ENCODE measurements at regions of chr3 and their contacts with region 1.

Region 1: DNA sequence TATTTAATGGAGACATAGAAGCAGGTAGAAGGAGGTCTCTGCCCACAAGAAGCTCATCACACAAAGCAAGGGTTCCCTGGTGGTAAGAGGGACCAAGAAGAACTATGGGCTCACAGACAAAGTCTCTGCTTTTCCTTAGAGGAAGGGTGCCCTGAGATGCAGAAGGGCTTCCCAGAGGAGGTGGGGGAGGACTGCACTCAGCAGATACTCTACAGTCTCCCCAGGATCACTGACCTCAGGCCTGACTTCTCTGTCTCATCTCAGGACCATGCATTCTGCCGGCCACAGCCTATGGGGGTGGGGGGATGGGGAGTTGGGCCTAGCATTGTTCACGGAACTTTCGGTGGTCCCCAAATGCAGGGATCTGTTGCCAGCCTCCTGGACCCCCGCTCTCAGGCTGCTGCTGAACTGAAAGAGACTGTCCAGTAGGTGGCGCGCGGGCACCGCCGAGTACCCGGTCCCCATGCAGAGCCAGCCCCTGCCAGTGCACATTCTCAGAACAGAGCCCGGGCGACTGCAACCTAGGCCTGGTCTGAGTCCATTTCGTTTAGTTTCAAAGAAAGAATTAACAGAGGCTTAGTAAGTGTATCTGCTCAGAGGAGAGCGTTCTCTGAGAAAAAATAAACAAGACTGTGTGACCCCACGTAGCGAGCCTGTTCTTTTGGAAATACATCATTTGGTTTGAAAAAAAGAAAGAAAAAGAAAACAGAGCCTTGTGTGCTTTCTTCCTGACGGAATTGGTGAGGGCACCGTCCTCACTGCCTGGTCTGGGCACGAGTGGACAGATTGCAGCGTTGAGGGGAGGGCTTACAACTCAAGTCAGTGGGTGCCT is 74.1 kb downstream of the LRTM1 start:
- DNase-seq: peak; percentile 70
- H3K4me3 ChIP-seq: no peak overlapping the region
- H3K27ac ChIP-seq: no peak overlapping the region
- H3K4me1 ChIP-seq: no peaks in the 10 kb centered on the region
- H3K27me3 ChIP-seq: no peaks in the 10 kb centered on the region
- CTCF ChIP-seq: peak; percentile 80

Region 2: DNA sequence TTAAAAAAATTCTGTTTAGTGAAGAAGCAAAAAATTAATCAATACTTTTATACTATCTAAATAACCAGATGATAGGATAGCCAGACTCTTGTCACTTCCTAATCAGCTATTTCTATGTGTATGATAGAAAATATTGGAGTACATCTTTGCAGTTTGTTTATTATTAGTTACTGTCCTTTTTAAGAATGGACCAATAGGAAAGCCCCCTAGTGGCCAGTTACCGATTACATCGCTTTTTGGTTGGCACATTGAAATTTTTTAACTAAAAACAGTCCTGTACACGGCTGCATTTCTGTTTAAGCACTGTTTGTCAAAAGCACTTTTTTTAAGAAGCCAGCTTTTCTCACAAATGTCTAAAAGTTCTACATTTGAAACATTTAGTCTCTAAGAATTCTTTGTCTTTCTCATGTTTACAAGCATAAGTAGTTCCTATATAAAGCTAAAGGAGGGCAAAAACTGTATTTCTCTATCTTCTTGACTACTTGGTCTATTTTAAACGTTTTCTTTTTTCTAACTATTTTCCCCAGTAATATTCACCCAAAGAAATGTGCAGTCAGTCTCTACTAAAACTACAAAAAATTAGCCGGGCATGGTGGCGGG is 327.2 kb after region 1 on chr3:
- intact Hi-C with region 1: loop called (anchors 10 kb)
- DNase-seq: peak; percentile 30
- H3K4me3 ChIP-seq: no peak overlapping the region
- H3K27ac ChIP-seq: no peak overlapping the region
- H3K4me1 ChIP-seq: no peaks in the 10 kb centered on the region
- H3K27me3 ChIP-seq: no peaks in the 10 kb centered on the region
- CTCF ChIP-seq: peak; percentile 77

Region 3: DNA sequence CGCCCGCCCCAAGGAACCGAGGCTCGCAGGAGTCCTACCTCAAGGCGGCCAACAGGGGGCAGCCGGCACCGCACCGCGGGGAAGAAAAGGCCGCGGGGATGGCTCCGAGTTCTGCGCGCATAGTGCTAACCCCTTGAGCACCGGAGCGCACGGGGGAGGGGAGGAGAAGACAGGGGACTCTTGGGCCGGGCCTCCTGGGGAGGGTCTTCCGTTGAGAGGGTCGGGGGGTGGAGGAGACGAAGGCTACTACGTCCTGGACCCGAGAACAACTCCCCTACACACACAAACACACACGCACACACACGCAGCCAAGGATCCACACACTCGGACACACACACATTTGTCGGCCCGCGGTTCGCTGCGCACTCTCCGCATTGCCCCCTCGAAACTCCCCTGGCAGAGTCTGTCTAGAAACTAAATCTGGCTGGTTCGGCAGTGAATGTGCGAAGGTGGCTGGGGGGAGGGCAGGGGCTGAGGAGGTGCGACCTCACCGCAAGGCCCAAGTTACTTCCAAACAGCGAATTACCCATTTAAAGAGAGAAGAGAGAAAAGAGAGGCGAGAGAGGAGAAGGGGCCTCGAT is 631.5 kb after region 1 on chr3:
- intact Hi-C with region 1: loop called (anchors 10 kb)
- DNase-seq: peak; percentile 75
- H3K4me3 ChIP-seq: peak overlapping the region; percentile 57
- H3K27ac ChIP-seq: peak overlapping the region; percentile 23
- H3K4me1 ChIP-seq: peaks cover 10% of the 10 kb centered on the region
- H3K27me3 ChIP-seq: peaks cover 40% of the 10 kb centered on the region
- CTCF ChIP-seq: peak; percentile 70

Region 4: DNA sequence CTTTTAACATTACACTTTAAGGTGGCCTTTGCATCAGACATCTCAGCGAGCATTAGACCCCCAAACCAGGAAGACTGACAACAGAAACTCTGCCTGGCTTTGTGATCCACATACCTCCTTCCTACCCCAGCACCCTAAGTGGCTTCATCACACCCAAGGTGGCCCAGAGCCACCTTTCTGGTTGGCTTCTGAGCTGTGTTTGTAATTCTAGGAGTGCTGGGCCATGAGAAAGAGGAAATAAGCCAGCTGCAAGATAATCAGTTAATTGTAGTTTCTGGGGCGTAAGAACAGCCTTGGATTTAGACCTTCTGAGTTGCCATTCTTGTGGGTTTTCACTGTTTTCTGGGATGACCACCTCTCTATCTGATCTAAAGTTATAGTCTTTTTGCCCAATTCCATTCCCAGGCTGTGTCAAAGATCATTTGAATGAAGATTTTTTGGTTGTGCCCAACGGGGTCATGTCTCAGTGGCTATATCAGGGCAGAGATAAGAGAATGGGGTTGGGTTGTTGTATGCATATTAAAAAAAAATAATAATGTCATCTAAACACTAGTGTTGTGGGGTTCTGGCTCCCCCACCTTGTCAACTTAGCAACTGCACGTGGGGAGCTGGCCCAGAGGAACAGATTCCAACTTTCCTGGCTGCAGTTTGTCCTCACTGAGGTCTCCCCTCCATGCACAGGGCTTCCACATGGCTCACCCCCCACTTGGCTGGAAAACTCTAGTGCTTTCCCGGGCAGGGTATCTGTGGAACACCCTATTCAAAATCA is 868.1 kb after region 1 on chr3:
- intact Hi-C with region 1: loop called (anchors 10 kb)
- DNase-seq: peak; percentile 26
- H3K4me3 ChIP-seq: no peak overlapping the region
- H3K27ac ChIP-seq: no peak overlapping the region
- H3K4me1 ChIP-seq: no peaks in the 10 kb centered on the region
- H3K27me3 ChIP-seq: no peaks in the 10 kb centered on the region
- CTCF ChIP-seq: peak; percentile 41

Region 5: GRCh38 chr3:55897573-55898224 is 1043.9 kb after region 1 on chr3:
- intact Hi-C with region 1: loop called (anchors 10 kb)
- DNase-seq: peak; percentile 19
- H3K4me3 ChIP-seq: no peak overlapping the region
- H3K27ac ChIP-seq: no peak overlapping the region
- H3K4me1 ChIP-seq: no peaks in the 10 kb centered on the region
- H3K27me3 ChIP-seq: no peaks in the 10 kb centered on the region
- CTCF ChIP-seq: peak; percentile 19

Region 6: GRCh38 chr3:56251343-56251945 is 1397.7 kb after region 1 on chr3:
- intact Hi-C with region 1: loop called (anchors 5 kb)
- DNase-seq: peak; percentile 44
- H3K4me3 ChIP-seq: no peak overlapping the region
- H3K27ac ChIP-seq: no peak overlapping the region
- H3K4me1 ChIP-seq: no peaks in the 10 kb centered on the region
- H3K27me3 ChIP-seq: no peaks in the 10 kb centered on the region
- CTCF ChIP-seq: peak; percentile 68

Measured in colonic mucosa (tissue), 4 donors.